Natural killer cell (primary cell): ENCODE measurements at regions of chr9 and their contacts with region 1.

Region 1: DNA sequence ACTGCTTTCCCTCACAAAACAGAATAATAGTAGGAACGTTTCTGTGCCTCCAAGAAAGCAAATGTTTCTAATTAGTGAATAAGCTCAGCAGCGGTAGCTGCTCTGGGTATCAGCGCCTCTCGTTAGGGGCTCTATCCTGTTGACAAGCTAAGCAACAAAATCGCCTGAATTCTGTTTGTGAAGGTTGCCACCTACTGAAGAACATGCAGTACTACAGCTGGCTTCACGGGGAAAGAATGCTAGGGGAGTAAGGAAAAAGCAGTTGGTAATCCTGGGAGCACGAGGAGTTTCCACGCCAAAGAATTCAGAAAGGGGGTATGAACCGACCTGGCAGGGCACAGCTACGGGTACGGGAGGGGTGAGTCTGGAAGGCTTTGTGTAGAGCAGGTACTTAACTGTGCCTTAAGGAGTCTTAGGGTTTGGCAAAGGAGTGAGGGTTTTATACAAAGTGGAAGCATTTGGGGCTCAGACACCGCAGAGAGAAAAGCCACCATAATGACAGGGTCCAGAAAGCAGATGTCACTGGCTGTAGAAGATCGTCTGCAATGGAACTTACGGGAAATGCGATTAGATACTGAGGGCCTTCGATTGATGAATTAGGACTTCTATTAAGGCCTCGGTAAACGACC is 171.7 kb downstream of the TTC39B start:
- DNase-seq: peak in 1 of 2 donors; percentile 70
- ATAC-seq: peak; percentile 64 to 92 (median 73)
- H3K4me3 ChIP-seq: no peak overlapping the region
- H3K4me3 Mint-ChIP-seq: no peak overlapping the region
- H3K27ac ChIP-seq: no peak overlapping the region
- H3K27ac Mint-ChIP-seq: no peak overlapping the region
- H3K4me1 ChIP-seq: no peaks in the 10 kb centered on the region
- H3K4me1 Mint-ChIP-seq: peaks cover 6 to 7% of the 10 kb centered on the region in 2 donors
- H3K27me3 ChIP-seq: no peaks in the 10 kb centered on the region
- H3K27me3 Mint-ChIP-seq: peaks cover 6 to 29% of the 10 kb centered on the region in 2 donors
- CTCF ChIP-seq: peak; percentile 70

Region 2: GRCh38 chr9:15104826-15105420 is 30.4 kb before region 1 on chr9:
- intact Hi-C with region 1: loop called (anchors 1 kb)
- DNase-seq: peak in 1 of 2 donors; percentile 67
- ATAC-seq: peak; percentile 46 to 72 (median 53)
- H3K4me3 ChIP-seq: no peak overlapping the region
- H3K4me3 Mint-ChIP-seq: no peak overlapping the region
- H3K27ac ChIP-seq: no peak overlapping the region
- H3K27ac Mint-ChIP-seq: no peak overlapping the region
- H3K4me1 ChIP-seq: no peaks in the 10 kb centered on the region
- H3K4me1 Mint-ChIP-seq: no peaks in the 10 kb centered on the region
- H3K27me3 ChIP-seq: no peaks in the 10 kb centered on the region
- H3K27me3 Mint-ChIP-seq: peaks cover 11 to 23% of the 10 kb centered on the region in 2 donors
- CTCF ChIP-seq: peak; percentile 62